IMR-90 (cell line): ENCODE measurements at regions of chr5 and their contacts with region 1.

Region 1: DNA sequence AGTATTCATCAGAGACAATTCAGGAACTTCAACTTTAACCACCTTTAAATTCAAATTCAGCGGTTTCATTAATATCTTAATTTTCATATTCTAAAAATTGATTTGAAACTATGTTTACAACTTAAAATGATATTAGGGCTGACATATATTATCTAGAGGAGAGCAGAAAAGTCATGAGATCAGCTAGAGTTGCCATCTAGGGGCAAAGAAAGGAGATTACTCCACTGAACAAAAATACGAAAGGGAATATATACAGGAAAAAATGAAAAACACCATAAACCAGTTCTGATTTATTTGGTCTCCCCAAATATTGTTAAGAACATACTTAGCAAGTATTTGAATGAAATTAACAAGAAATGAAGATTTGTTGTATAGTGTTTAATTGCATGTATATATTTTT is 946.3 kb downstream of the DTWD2 start:
- DNase-seq: no peak
- ATAC-seq: no peak
- H3K4me3 ChIP-seq: no peak overlapping the region
- H3K27ac ChIP-seq: no peak overlapping the region
- H3K4me1 ChIP-seq: no peaks in the 10 kb centered on the region
- H3K27me3 ChIP-seq: no peaks in the 10 kb centered on the region
- CTCF ChIP-seq: no peak
- POLR2A ChIP-seq: no peak
- RAD21 ChIP-seq: peak; percentile 12; the same call in 1 of the 2 replicates

Region 2: GRCh38 chr5:117486869-117487472 is 555.1 kb before region 1 on chr5:
- CTCF ChIA-PET with region 1: no interaction called
- POLR2A ChIA-PET with region 1: no interaction called
- dilution Hi-C with region 1: no loop called
- in situ Hi-C with region 1: no loop called
- intact Hi-C with region 1: no loop called
- DNase-seq: no peak
- ATAC-seq: peak; percentile 27; the same call in 1 of the 2 replicates
- H3K4me3 ChIP-seq: no peak overlapping the region
- H3K27ac ChIP-seq: no peak overlapping the region
- H3K4me1 ChIP-seq: no peaks in the 10 kb centered on the region
- H3K27me3 ChIP-seq: no peaks in the 10 kb centered on the region
- CTCF ChIP-seq: no peak
- POLR2A ChIP-seq: no peak
- RAD21 ChIP-seq: no peak

Region 3: GRCh38 chr5:117519957-117520500 is 522.0 kb before region 1 on chr5:
- CTCF ChIA-PET with region 1: no interaction called
- POLR2A ChIA-PET with region 1: no interaction called
- dilution Hi-C with region 1: no loop called
- in situ Hi-C with region 1: no loop called
- intact Hi-C with region 1: loop called (anchors 10 kb)
- DNase-seq: no peak
- ATAC-seq: no peak
- H3K4me3 ChIP-seq: no peak overlapping the region
- H3K27ac ChIP-seq: no peak overlapping the region
- H3K4me1 ChIP-seq: no peaks in the 10 kb centered on the region
- H3K27me3 ChIP-seq: no peaks in the 10 kb centered on the region
- CTCF ChIP-seq: no peak
- POLR2A ChIP-seq: no peak
- RAD21 ChIP-seq: no peak

Region 4: GRCh38 chr5:117803533-117803932 is 238.5 kb before region 1 on chr5:
- CTCF ChIA-PET with region 1: no interaction called
- POLR2A ChIA-PET with region 1: no interaction called
- dilution Hi-C with region 1: no loop called
- in situ Hi-C with region 1: no loop called
- intact Hi-C with region 1: loop called (anchors 5 kb)
- DNase-seq: peak; percentile 90
- ATAC-seq: peak; percentile 94
- H3K4me3 ChIP-seq: no peak overlapping the region
- H3K27ac ChIP-seq: peak overlapping the region; percentile 76; the same call in 1 of the 2 replicates
- H3K4me1 ChIP-seq: peaks cover 2% of the 10 kb centered on the region
- H3K27me3 ChIP-seq: no peaks in the 10 kb centered on the region
- CTCF ChIP-seq: no peak
- POLR2A ChIP-seq: no peak
- RAD21 ChIP-seq: no peak

Region 5: GRCh38 chr5:117813850-117814249 is 228.2 kb before region 1 on chr5:
- CTCF ChIA-PET with region 1: no interaction called
- POLR2A ChIA-PET with region 1: no interaction called
- dilution Hi-C with region 1: no loop called
- in situ Hi-C with region 1: no loop called
- intact Hi-C with region 1: no loop called
- DNase-seq: no peak
- ATAC-seq: no peak
- H3K4me3 ChIP-seq: no peak overlapping the region
- H3K27ac ChIP-seq: no peak overlapping the region
- H3K4me1 ChIP-seq: no peaks in the 10 kb centered on the region
- H3K27me3 ChIP-seq: no peaks in the 10 kb centered on the region
- CTCF ChIP-seq: no peak
- POLR2A ChIP-seq: no peak
- RAD21 ChIP-seq: no peak

Region 6: DNA sequence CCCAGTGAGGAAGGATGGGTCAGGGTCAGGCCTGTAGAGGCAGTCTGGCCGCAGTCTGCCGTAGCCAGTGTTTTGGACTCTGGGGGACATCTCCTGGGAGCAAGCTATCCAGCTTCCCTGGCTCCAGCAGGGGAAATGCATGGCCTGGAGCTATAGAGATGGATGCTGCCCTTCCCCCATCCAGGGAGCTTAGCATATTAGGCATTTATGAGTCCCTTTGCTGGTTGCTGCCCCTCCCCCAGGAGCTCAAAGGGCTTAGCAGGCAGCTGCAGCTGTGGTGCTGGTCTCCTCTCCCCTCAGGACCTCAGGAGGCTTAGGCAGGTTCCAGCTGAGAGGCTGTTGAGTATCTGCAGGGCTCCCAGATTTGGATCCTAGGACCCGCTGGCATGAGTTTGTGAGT is 212.4 kb before region 1 on chr5:
- CTCF ChIA-PET with region 1: no interaction called
- POLR2A ChIA-PET with region 1: no interaction called
- dilution Hi-C with region 1: no loop called
- in situ Hi-C with region 1: no loop called
- intact Hi-C with region 1: loop called (anchors 1 kb)
- DNase-seq: no peak
- ATAC-seq: no peak
- H3K4me3 ChIP-seq: no peak overlapping the region
- H3K27ac ChIP-seq: no peak overlapping the region
- H3K4me1 ChIP-seq: no peaks in the 10 kb centered on the region
- H3K27me3 ChIP-seq: no peaks in the 10 kb centered on the region
- CTCF ChIP-seq: no peak
- POLR2A ChIP-seq: no peak
- RAD21 ChIP-seq: no peak

Region 7: GRCh38 chr5:118984602-118985001 is 942.5 kb after region 1 on chr5:
- CTCF ChIA-PET with region 1: no interaction called
- POLR2A ChIA-PET with region 1: no interaction called
- dilution Hi-C with region 1: no loop called
- in situ Hi-C with region 1: no loop called
- intact Hi-C with region 1: no loop called
- DNase-seq: peak; percentile 65
- ATAC-seq: no peak
- H3K4me3 ChIP-seq: no peak overlapping the region
- H3K27ac ChIP-seq: no peak overlapping the region
- H3K4me1 ChIP-seq: no peaks in the 10 kb centered on the region
- H3K27me3 ChIP-seq: no peaks in the 10 kb centered on the region
- CTCF ChIP-seq: no peak
- POLR2A ChIP-seq: no peak
- RAD21 ChIP-seq: no peak